ENCODE measurements at regions of chr19 and their contacts with region 1.

Region 1: GRCh38 chr19:6811906-6812305 is 39.4 kb downstream of the VAV1 start:
- DNase-seq: no peak
- H3K4me3 Mint-ChIP-seq: no peak overlapping the region
- H3K27ac Mint-ChIP-seq: peak overlapping the region; percentile 68
- H3K4me1 Mint-ChIP-seq: peaks cover 68% of the 10 kb centered on the region
- H3K27me3 Mint-ChIP-seq: no peaks in the 10 kb centered on the region

Region 2: GRCh38 chr19:6730153-6730825 is 81.6 kb before region 1 on chr19:
- CTCF ChIA-PET with region 1: no interaction called
- POLR2A ChIA-PET with region 1: no interaction called
- intact Hi-C with region 1: no loop called
- DNase-seq: peak; percentile 61
- H3K4me3 Mint-ChIP-seq: no peak overlapping the region
- H3K27ac Mint-ChIP-seq: no peak overlapping the region
- H3K4me1 Mint-ChIP-seq: no peaks in the 10 kb centered on the region
- H3K27me3 Mint-ChIP-seq: no peaks in the 10 kb centered on the region

Region 3: GRCh38 chr19:6801485-6802086 is 10.3 kb before region 1 on chr19:
- CTCF ChIA-PET with region 1: interaction called, 29 read pairs
- POLR2A ChIA-PET with region 1: interaction called, 14 read pairs
- intact Hi-C with region 1: loop called (anchors 1 kb)
- DNase-seq: peak; percentile 89
- H3K4me3 Mint-ChIP-seq: peak overlapping the region; percentile 75
- H3K27ac Mint-ChIP-seq: peak overlapping the region; percentile 94
- H3K4me1 Mint-ChIP-seq: peaks cover 53% of the 10 kb centered on the region
- H3K27me3 Mint-ChIP-seq: no peaks in the 10 kb centered on the region

Region 4: DNA sequence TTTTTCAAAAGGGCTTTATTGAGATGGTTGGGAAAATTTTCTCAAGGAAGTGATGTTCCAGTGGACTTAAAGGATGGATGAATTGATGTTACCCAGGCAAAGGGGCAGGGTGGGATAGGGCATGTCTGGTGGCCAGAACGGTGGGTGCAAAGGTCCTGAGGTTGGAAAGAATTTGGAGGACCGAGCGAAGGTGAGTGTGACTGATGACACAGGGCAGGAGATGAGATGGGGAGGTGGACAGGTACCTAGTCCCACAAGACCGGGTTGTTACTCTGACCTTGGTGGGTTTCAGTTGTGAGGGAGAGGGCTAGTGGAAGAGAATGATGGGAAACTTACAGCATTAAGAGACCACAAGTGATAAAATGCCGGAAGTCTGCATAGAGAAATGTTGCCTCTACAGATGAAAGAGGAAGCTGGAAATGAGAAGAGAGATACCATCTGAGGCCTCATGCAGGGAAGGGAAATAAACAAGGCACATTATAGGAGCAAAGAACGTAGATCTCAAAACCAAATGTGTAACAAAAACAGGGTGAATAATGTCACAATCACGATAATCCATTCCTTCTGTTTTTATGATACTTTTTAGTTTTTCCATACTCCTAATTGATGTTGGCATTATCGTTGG is 80.0 kb after region 1 on chr19:
- CTCF ChIA-PET with region 1: no interaction called
- POLR2A ChIA-PET with region 1: no interaction called
- intact Hi-C with region 1: no loop called
- DNase-seq: peak; percentile 10
- H3K4me3 Mint-ChIP-seq: peak overlapping the region; percentile 44
- H3K27ac Mint-ChIP-seq: peak overlapping the region; percentile 85
- H3K4me1 Mint-ChIP-seq: peaks cover 65% of the 10 kb centered on the region
- H3K27me3 Mint-ChIP-seq: no peaks in the 10 kb centered on the region

Region 5: DNA sequence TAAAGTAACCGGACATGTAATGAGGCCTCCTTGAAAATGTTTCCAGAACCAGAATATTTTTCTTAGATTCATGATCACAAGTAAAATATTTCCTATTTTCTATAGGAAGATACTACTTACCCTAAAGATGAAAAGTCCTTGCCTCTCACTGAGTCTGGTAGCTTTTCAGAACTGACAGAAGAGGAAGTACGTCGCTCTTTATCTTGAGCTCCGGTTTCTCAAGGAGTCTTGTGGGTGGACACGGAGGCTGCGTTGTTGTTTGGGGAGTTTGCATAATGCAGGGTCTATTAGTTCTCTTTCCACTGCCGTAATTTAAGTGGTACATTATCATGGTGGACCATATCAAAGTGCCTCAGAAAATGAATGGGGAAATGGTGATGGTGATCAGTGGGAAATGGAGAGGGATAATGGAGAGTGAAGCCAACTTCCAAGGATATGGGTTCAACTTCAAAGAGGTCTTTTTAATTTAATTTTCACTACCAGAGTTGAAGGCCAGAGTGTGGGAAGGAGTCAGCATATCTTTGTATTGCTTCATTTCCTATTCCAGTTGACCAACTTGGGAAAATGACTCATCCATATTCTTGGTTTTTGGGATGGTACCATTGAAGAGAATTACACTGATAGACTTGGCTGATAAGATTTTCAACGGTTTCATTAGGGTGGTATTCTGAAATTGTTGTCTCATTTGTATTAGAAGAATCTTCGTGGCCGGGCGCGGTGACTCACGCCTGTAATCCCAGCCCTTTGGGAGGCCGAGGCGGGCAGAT is 186.0 kb after region 1 on chr19:
- CTCF ChIA-PET with region 1: no interaction called
- POLR2A ChIA-PET with region 1: no interaction called
- intact Hi-C with region 1: no loop called
- DNase-seq: no peak
- H3K4me3 Mint-ChIP-seq: peak overlapping the region; percentile 69
- H3K27ac Mint-ChIP-seq: peak overlapping the region; percentile 64
- H3K4me1 Mint-ChIP-seq: peaks cover 15% of the 10 kb centered on the region
- H3K27me3 Mint-ChIP-seq: no peaks in the 10 kb centered on the region